ENCODE measurements at regions of chr5 and their contacts with region 1.

Region 1: GRCh38 chr5:150458819-150459557 is 9.4 kb upstream of the RPS14 start:
- DNase-seq: peak; percentile 57 to 86 (median 70)
- H3K4me3 ChIP-seq: peak overlapping the region in 53 of 59 donors; percentile 8 to 60 (median 42)
- H3K27ac ChIP-seq: no peak overlapping the region
- H3K27me3 ChIP-seq: no peaks in the 10 kb centered on the region
- CTCF ChIP-seq: peak; percentile 67 to 93 (median 82)

Region 2: DNA sequence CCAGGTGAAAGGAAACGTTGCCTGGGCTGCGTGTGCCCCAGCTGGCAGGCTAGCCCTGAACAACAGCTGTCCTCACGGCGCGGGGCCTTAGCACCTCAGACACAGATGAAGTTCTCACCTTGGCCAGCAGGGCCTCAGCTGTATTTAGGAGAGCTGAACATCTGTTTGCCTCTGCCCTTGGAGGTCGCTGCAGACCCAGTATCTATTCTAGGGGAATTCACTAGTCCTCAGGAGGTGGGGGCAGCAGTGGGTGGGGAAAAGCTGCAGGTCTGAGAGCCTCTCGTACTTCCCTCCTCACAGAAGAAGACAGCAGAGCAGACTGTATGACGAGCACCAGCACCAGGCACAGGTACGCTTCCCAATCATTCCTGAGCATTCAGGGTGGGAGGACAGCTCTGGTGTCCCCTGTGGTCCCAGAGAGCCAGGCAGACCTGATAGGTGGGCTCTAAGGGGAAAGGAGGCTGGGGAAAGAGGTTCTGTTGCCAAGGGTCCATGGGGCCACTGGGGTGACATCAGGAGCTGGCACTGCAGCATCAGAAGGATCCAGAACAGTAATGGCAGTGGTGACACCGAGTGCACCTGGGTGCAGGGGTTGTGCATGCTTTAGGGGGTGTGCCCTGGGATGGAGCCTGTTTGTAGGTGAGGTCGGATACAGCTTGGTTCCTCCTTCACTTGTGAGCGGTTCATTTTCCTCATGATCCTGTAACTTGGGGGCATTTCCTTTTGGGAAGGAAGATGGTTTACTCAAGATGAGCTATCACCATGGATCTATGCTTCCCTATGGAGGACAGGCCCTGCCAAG is 60.1 kb before region 1 on chr5:
- intact Hi-C with region 1: no loop called
- DNase-seq: no peak
- H3K4me3 ChIP-seq: no peak overlapping the region
- H3K27ac ChIP-seq: peak overlapping the region in 23 of 59 donors; percentile 1 to 89 (median 31)
- H3K27me3 ChIP-seq: no peaks in the 10 kb centered on the region
- CTCF ChIP-seq: peak in 12 of 56 donors; percentile 6 to 51 (median 24)

Region 3: DNA sequence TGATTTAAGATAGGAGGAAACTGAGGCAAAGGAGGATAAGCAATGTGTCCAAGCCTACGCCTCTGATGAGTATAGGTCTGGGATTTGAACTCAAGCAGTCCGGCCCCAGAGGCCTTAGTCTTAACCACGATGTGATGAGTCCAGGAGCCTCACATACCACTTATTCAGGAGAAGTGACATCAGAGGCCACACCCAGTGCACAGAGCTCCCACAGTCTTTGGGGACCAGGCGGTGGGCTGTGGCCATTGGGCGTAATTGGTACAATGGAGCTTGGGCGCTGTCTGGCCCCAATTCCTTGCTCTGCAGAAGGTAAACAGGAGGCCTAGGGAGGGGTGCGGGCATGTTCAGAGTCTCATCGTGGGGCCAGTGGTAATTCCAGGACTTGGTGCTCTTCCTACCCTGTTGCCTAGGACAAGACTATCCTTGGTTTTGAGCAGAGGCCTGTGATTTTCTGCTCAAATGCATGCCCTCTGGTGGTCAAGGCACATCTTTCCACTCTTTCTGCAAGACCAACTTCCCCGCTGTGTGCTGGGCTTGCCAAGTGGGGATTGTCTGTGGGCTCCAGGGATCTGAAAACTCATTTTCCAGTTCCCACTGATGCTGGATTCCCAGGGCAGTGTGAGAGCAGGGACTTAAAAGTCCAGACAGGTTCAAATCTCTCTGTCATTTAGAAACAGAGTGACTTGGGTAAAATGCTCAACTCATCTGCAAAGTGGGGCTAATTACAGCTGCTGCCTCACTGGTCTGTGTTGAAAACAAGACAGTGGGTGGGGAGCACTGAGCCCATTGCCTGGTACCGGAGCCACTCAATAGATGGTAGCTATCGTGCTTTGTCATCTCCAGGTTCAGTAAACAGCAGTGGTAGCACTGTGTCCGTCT is 64.7 kb after region 1 on chr5:
- intact Hi-C with region 1: loop called (anchors 2 to 5 kb)
- DNase-seq: peak in 8 of 10 donors; percentile 31 to 71 (median 61)
- H3K4me3 ChIP-seq: peak overlapping the region in 1 of 59 donors; percentile 9
- H3K27ac ChIP-seq: peak overlapping the region in 58 of 59 donors; percentile 12 to 100 (median 74)
- H3K27me3 ChIP-seq: no peaks in the 10 kb centered on the region
- CTCF ChIP-seq: peak; percentile 57 to 87 (median 77)

Region 4: GRCh38 chr5:150544611-150545219 is 85.7 kb after region 1 on chr5:
- intact Hi-C with region 1: loop called (anchors 2 to 5 kb)
- DNase-seq: peak in 9 of 10 donors; percentile 23 to 78 (median 64)
- H3K4me3 ChIP-seq: no peak overlapping the region
- H3K27ac ChIP-seq: peak overlapping the region in 39 of 59 donors; percentile 0 to 73 (median 46)
- H3K27me3 ChIP-seq: no peaks in the 10 kb centered on the region
- CTCF ChIP-seq: peak; percentile 43 to 92 (median 83)

Region 5: GRCh38 chr5:150560401-150561193 is 101.6 kb after region 1 on chr5:
- intact Hi-C with region 1: loop called in 1 of 2 experiments (anchors 5 kb)
- DNase-seq: peak in 9 of 10 donors; percentile 71 to 97 (median 85)
- H3K4me3 ChIP-seq: no peak overlapping the region
- H3K27ac ChIP-seq: peak overlapping the region in 1 of 59 donors; percentile 36
- H3K27me3 ChIP-seq: no peaks in the 10 kb centered on the region
- CTCF ChIP-seq: peak; percentile 86 to 99 (median 97)

Region 6: DNA sequence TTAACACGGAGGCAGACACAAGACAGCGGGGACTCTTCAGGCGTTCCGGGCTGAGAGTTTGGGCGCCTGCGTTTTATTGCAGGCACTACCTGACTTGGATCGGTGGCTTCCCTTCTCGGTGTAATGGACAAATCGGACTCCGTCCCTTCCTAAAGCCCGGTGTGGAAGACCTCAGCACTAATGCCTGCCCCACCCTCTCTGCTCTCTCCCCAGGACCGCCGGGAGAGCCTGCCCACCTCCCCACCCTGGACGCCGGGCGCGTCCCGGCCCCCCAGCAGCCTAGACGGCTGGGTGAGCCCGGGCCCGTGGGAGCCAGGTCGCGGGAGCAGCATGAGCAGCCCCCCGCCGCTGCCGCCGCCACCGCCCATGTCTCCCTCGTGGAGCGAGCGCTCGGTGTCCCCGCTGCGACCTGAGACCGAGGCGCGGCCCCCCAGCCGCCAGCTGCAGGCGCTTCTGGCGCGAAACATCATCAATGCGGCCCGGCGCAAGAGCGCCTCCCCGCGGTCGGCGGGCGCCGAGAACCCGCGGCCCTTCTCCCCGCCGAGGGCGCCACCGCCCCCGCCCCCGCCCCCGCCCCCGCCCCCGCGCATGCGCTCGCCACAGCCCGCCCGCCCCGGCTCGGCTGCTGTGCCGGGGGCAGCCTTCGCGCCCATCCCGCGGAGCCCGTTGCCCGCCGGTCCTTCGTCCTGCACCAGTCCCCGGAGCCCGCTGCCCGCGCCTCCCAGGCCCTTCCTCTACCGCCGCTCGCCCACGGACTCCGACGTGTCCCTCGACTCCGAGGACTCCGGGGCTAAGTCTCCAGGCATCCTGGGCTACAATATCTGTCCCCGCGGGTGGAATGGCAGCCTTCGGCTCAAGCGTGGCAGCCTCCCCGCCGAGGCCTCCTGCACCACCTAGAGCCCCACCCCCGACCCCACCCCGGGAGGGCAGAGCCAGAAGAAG is 197.5 kb after region 1 on chr5:
- intact Hi-C with region 1: loop called (anchors 5 kb)
- DNase-seq: peak in 9 of 10 donors; percentile 49 to 84 (median 64)
- H3K4me3 ChIP-seq: peak overlapping the region; percentile 29 to 80 (median 65)
- H3K27ac ChIP-seq: peak overlapping the region in 36 of 59 donors; percentile 12 to 81 (median 58)
- H3K27me3 ChIP-seq: no peaks in the 10 kb centered on the region
- CTCF ChIP-seq: peak in 55 of 56 donors; percentile 44 to 96 (median 71)

Region 7: DNA sequence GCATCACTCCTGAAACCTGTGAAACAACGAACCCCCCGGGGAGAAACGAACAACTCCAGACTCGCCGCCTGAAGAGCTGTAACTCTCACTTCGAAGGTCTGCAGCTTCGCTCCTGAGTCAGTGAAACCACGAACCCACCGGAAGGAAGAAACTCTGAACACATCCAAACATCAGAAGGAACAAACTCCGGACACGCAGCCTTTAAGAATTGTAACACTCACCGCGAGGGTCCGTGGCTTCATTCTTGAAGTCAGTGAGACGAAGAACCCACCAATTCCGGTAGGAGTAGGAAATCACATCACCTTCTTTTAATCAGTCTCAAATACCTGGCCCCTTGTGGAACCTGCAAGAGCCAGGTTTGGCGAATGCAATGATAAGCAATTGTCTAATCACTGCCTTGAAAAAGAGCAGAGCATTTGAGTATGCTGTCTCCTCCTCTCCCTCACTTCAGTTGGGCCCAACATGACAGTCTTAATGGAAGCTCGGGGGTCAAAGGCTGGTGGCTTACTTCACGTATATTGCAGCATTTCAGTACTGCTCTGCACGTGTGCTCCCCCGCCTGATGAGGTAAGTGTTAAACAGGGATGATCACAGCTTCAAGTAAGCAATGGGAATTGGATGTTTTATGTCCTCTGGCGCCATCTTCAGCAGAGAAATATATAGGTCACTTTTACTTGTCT is 387.8 kb after region 1 on chr5:
- intact Hi-C with region 1: loop called in 1 of 2 experiments (anchors 5 kb)
- DNase-seq: peak in 1 of 10 donors; percentile 51
- H3K4me3 ChIP-seq: peak overlapping the region in 2 of 59 donors; percentile 17 to 28
- H3K27ac ChIP-seq: no peak overlapping the region
- H3K27me3 ChIP-seq: no peaks in the 10 kb centered on the region
- CTCF ChIP-seq: peak; percentile 42 to 83 (median 66)

Measured in dorsolateral prefrontal cortex (tissue), 120 donors.